CD4-positive, alpha-beta T cell (primary cell): ENCODE measurements at regions of chr12 and their contacts with region 1.

Region 1: DNA sequence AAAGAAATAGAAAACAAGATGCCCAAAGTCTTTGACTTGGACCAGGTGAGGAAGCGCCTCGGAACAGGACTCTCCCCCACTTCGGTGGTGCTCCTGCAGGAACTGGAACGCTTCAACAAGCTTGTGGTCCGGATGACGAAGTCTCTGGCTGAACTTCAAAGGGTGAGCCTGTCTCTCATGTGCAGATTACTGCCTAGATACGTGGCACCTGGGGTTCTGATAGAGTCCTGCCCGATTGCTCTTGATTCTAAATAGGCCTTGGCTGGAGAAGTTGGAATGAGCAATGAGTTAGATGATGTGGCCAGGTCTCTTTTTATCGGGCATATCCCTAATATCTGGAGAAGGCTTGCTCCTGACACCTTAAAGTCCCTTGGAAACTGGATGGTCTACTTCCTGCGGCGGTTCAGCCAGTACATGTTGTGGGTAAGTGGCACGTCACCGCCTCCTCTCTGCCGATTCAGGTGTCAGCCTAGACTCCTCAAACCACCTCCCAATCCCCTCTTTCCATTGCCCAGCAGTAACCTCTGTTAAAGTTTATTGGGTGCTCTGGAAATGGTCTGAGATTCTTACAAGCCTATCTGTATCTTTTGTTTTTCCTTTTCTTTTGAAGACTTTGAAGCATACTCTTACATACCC is 40.8 kb downstream of the CCDC92 start:
- DNase-seq: peak in 13 of 14 experiments; percentile 21 to 84 (median 42)
- ATAC-seq: peak; percentile 88
- H3K4me3 ChIP-seq: peak overlapping the region; percentile 33
- H3K4me3 Mint-ChIP-seq: peak overlapping the region; percentile 62
- H3K27ac ChIP-seq: no peak overlapping the region
- H3K27ac Mint-ChIP-seq: peak overlapping the region; percentile 16
- H3K4me1 ChIP-seq: peaks cover 20% of the 10 kb centered on the region
- H3K4me1 Mint-ChIP-seq: peaks cover 24% of the 10 kb centered on the region
- H3K27me3 ChIP-seq: no peaks in the 10 kb centered on the region
- H3K27me3 Mint-ChIP-seq: no peaks in the 10 kb centered on the region
- CTCF ChIP-seq: no peak

Region 2: GRCh38 chr12:123905319-123905925 is 26.4 kb before region 1 on chr12:
- CTCF ChIA-PET with region 1: no interaction called
- POLR2A ChIA-PET with region 1: interaction called, 3 read pairs
- intact Hi-C with region 1: loop called in 1 of 2 experiments (anchors 1 kb)
- DNase-seq: peak; percentile 42 to 86 (median 60)
- ATAC-seq: peak; percentile 73
- H3K4me3 ChIP-seq: no peak overlapping the region
- H3K4me3 Mint-ChIP-seq: no peak overlapping the region
- H3K27ac ChIP-seq: no peak overlapping the region
- H3K27ac Mint-ChIP-seq: no peak overlapping the region
- H3K4me1 ChIP-seq: peaks cover 4% of the 10 kb centered on the region
- H3K4me1 Mint-ChIP-seq: peaks cover 12% of the 10 kb centered on the region
- H3K27me3 ChIP-seq: no peaks in the 10 kb centered on the region
- H3K27me3 Mint-ChIP-seq: no peaks in the 10 kb centered on the region
- CTCF ChIP-seq: peak; percentile 90

Region 3: DNA sequence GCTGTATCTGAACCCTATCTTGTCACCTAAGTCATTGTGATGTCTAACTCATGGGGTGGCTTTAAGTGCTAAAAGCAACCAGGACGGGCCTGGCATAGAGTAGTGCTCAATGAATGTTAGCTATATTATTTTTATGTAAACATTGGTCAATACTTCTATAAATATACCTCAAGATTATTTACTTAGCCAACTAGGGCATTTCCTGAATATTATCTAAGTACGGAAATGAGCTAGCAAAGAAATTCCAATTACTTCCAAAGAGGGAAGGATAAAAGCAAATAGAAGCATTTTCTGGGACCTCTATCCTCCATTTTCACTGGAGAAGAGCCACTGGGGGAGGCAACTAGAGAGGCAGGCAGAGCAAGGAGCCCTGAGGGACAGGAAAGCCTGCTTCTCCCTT is 20.2 kb after region 1 on chr12:
- CTCF ChIA-PET with region 1: no interaction called
- POLR2A ChIA-PET with region 1: no interaction called
- intact Hi-C with region 1: no loop called
- DNase-seq: no peak
- ATAC-seq: no peak
- H3K4me3 ChIP-seq: no peak overlapping the region
- H3K4me3 Mint-ChIP-seq: no peak overlapping the region
- H3K27ac ChIP-seq: no peak overlapping the region
- H3K27ac Mint-ChIP-seq: no peak overlapping the region
- H3K4me1 ChIP-seq: no peaks in the 10 kb centered on the region
- H3K4me1 Mint-ChIP-seq: no peaks in the 10 kb centered on the region
- H3K27me3 ChIP-seq: no peaks in the 10 kb centered on the region
- H3K27me3 Mint-ChIP-seq: no peaks in the 10 kb centered on the region
- CTCF ChIP-seq: no peak

Region 4: GRCh38 chr12:124294780-124295241 is 363.0 kb after region 1 on chr12 and contains the start of gene RFLNA:
- CTCF ChIA-PET with region 1: no interaction called
- POLR2A ChIA-PET with region 1: no interaction called
- intact Hi-C with region 1: no loop called
- DNase-seq: no peak
- ATAC-seq: no peak
- H3K4me3 ChIP-seq: no peak within 1 kb of the TSS
- H3K4me3 Mint-ChIP-seq: no peak within 1 kb of the TSS
- H3K27ac ChIP-seq: no peak within 1 kb of the TSS
- H3K27ac Mint-ChIP-seq: no peak within 1 kb of the TSS
- H3K4me1 ChIP-seq: no peaks in the 10 kb centered on the region
- H3K4me1 Mint-ChIP-seq: peaks cover 4% of the 10 kb centered on the region
- H3K27me3 ChIP-seq: peaks cover 20 to 37% of the 10 kb centered on the region in 2 experiments
- H3K27me3 Mint-ChIP-seq: peaks cover 56% of the 10 kb centered on the region
- CTCF ChIP-seq: no peak
- total RNA-seq, gene RFLNA: not detected